WTC11 (cell line): ENCODE measurements at regions of chr2 and their contacts with region 1.

Region 1: GRCh38 chr2:80238692-80239469 is 65.7 kb downstream of the LRRTM1 start:
- DNase-seq: peak; percentile 69
- ATAC-seq: peak; percentile 75
- H3K4me3 Mint-ChIP-seq: no peak overlapping the region
- H3K27ac Mint-ChIP-seq: no peak overlapping the region
- H3K4me1 Mint-ChIP-seq: peaks cover 24% of the 10 kb centered on the region
- H3K27me3 Mint-ChIP-seq: no peaks in the 10 kb centered on the region; the same call in 1 of the 2 replicates
- CTCF ChIP-seq: peak; percentile 88

Region 2: GRCh38 chr2:80073134-80073561 is 165.7 kb before region 1 on chr2:
- CTCF ChIA-PET with region 1: interaction called, 19 read pairs
- POLR2A ChIA-PET with region 1: no interaction called
- DNase-seq: peak; percentile 30
- ATAC-seq: peak; percentile 78
- H3K4me3 Mint-ChIP-seq: no peak overlapping the region
- H3K27ac Mint-ChIP-seq: no peak overlapping the region
- H3K4me1 Mint-ChIP-seq: peaks cover 5% of the 10 kb centered on the region
- H3K27me3 Mint-ChIP-seq: peaks cover 3% of the 10 kb centered on the region; the same call in 1 of the 2 replicates
- CTCF ChIP-seq: peak; percentile 71

Region 3: DNA sequence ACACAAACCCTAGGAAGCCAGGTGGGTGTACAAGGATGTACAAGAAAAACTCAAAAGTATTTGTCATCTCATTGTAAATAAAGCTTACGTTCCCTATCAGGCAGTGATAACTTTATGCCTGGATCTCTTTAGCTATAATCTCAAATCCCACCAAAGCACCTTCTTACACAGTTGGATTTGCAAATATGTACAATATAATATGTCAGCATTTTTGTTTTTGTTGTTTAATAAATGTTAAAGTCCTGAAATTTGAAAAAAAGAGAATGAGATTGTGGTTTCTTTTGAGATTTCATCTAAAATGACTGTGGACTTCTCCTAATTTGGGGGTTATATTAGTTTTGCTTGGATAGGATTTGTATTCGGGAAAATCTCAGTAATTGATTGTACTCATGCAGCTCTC is 16.2 kb before region 1 on chr2:
- CTCF ChIA-PET with region 1: interaction called, 10 read pairs
- POLR2A ChIA-PET with region 1: no interaction called
- DNase-seq: no peak
- ATAC-seq: no peak
- H3K4me3 Mint-ChIP-seq: no peak overlapping the region
- H3K27ac Mint-ChIP-seq: no peak overlapping the region
- H3K4me1 Mint-ChIP-seq: no peaks in the 10 kb centered on the region
- H3K27me3 Mint-ChIP-seq: no peaks in the 10 kb centered on the region; the same call in 1 of the 2 replicates
- CTCF ChIP-seq: no peak

Region 4: GRCh38 chr2:80255918-80256781 is 17.3 kb after region 1 on chr2:
- CTCF ChIA-PET with region 1: interaction called, 11 read pairs
- POLR2A ChIA-PET with region 1: no interaction called
- DNase-seq: peak; percentile 13
- ATAC-seq: peak; percentile 85
- H3K4me3 Mint-ChIP-seq: no peak overlapping the region
- H3K27ac Mint-ChIP-seq: no peak overlapping the region
- H3K4me1 Mint-ChIP-seq: peaks cover 9% of the 10 kb centered on the region
- H3K27me3 Mint-ChIP-seq: no peaks in the 10 kb centered on the region; the same call in 1 of the 2 replicates
- CTCF ChIP-seq: no peak